Caco-2 (cell line): ENCODE measurements at regions of chr21 and their contacts with region 1.

Region 1: DNA sequence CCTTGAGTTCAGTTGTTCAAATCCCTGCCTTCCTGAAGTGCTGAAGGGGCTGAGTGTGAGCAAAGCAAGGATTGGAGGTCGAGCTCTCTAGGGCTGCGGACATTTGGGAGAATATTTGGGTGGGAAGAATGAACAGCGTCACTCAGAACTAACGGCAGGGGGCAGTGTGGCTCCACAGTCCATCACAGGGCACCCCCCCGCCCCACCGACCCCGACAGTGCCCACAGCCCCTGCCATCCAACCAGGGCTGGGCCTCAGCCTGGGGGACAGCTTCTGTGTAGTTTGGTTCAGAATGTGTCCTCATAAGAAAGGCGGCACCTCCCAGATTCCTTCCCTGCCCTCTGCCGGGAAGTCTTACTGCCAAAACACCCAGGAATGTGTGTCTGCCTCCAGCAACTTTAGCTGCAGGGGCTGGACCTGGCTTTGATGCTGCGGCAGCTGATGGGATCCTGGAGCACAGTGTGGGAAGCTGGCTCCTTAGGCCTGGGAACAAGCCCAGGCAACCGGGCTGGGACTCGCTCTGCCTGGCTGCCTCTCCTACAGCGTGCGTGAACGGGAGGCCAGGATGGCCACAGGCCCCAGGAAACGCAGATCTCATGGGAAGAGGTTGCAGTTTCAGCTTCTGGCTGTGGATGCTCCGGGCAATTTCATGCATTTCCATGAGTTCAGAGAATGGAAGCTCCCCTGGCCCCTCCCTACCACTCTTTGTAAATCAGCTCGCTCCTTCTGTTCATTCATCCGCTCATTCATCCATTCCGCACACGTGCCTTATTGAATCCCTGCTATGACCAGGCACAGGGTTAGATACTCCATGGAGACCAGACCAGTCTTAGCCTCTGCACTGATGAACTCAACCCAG is 104.9 kb upstream of the TMPRSS2 start:
- DNase-seq: peak; percentile 74 to 82
- H3K4me3 ChIP-seq: 0 out of 2 replicates have a peak overlapping the region, but pooled peaks have one; percentile 2
- H3K4me3 Mint-ChIP-seq: peak overlapping the region; percentile 60
- H3K27ac Mint-ChIP-seq: peak overlapping the region; percentile 63
- H3K4me1 ChIP-seq: peaks cover 30% of the 10 kb centered on the region
- H3K4me1 Mint-ChIP-seq: peaks cover 18% of the 10 kb centered on the region
- H3K27me3 ChIP-seq: no peaks in the 10 kb centered on the region
- H3K27me3 Mint-ChIP-seq: no peaks in the 10 kb centered on the region
- CTCF ChIP-seq: peak; percentile 73 to 90

Region 2: GRCh38 chr21:41634873-41635272 is 22.0 kb after region 1 on chr21:
- CTCF ChIA-PET with region 1: interaction called, 10 read pairs
- POLR2A ChIA-PET with region 1: no interaction called
- intact Hi-C with region 1: loop called (anchors 1 kb)
- DNase-seq: peak in 1 of 2 experiments; percentile 26
- H3K4me3 ChIP-seq: no peak overlapping the region
- H3K4me3 Mint-ChIP-seq: no peak overlapping the region
- H3K27ac Mint-ChIP-seq: peak overlapping the region; percentile 36
- H3K4me1 ChIP-seq: peaks cover 30% of the 10 kb centered on the region
- H3K4me1 Mint-ChIP-seq: peaks cover 24% of the 10 kb centered on the region
- H3K27me3 ChIP-seq: no peaks in the 10 kb centered on the region; the same call in 1 of the 2 replicates
- H3K27me3 Mint-ChIP-seq: no peaks in the 10 kb centered on the region
- CTCF ChIP-seq: no peak

Region 3: DNA sequence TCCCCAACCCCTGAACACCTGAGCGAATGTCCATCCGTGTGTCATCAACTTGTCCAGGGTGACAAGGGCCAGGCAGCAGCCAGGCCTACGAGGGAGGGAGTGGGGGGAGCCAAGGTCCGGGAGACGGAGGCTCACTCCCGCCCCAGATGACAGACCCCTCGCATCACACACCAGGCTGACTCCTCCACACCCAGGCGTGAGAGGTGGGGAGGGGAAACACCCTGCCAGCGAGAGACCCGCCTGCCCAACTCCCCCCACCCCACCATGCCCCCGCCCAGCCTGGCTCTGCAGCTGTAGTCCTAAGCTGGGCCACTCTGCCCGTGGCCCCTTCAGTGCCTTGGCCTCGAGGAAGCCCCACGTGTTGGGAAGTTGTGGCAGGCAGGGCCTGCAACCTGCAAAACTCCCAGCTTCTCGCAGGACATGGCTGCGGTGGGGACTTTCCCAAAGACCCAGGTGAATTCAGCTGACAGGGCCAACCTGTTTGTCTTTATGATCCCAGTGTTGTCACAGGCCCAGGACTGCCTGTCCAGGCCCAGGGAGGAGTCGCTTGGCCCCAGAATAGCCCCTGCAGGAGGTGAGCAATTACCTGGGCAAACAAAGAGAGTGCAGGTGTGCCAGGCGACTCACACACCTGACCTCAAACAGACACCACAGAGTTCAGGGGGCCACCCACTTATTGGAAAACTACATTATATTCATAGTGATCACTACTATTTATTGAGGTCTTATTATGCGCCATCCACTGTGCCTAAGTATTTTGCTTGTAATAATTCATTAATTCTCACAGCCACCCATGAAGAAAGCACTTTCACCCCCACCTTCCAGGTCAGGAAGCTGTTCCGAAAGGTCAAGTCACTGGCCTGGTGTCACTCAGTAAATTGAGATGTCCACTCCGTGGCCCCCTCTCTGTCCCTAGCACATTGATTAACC is 91.2 kb after region 1 on chr21:
- CTCF ChIA-PET with region 1: interaction called, 13 read pairs
- POLR2A ChIA-PET with region 1: no interaction called
- intact Hi-C with region 1: no loop called
- DNase-seq: peak; percentile 85 to 92
- H3K4me3 ChIP-seq: no peak overlapping the region
- H3K4me3 Mint-ChIP-seq: peak overlapping the region; percentile 28
- H3K27ac Mint-ChIP-seq: peak overlapping the region; percentile 67
- H3K4me1 ChIP-seq: peaks cover 53% of the 10 kb centered on the region
- H3K4me1 Mint-ChIP-seq: peaks cover 40% of the 10 kb centered on the region
- H3K27me3 ChIP-seq: no peaks in the 10 kb centered on the region
- H3K27me3 Mint-ChIP-seq: no peaks in the 10 kb centered on the region
- CTCF ChIP-seq: no peak

Region 4: GRCh38 chr21:41763398-41763931 is 150.6 kb after region 1 on chr21:
- CTCF ChIA-PET with region 1: interaction called, 61 read pairs
- POLR2A ChIA-PET with region 1: interaction called, 4 read pairs
- intact Hi-C with region 1: loop called (anchors 2 kb)
- DNase-seq: no peak
- H3K4me3 ChIP-seq: no peak overlapping the region
- H3K4me3 Mint-ChIP-seq: peak overlapping the region; percentile 37
- H3K27ac Mint-ChIP-seq: peak overlapping the region; percentile 79
- H3K4me1 ChIP-seq: peaks cover 45% of the 10 kb centered on the region
- H3K4me1 Mint-ChIP-seq: peaks cover 45% of the 10 kb centered on the region
- H3K27me3 ChIP-seq: no peaks in the 10 kb centered on the region
- H3K27me3 Mint-ChIP-seq: no peaks in the 10 kb centered on the region
- CTCF ChIP-seq: no peak

Region 5: GRCh38 chr21:41816220-41817165 is 203.6 kb after region 1 on chr21:
- CTCF ChIA-PET with region 1: interaction called, 25 read pairs
- POLR2A ChIA-PET with region 1: no interaction called
- intact Hi-C with region 1: loop called (anchors 1 kb)
- DNase-seq: peak; percentile 51 to 64
- H3K4me3 ChIP-seq: no peak overlapping the region
- H3K4me3 Mint-ChIP-seq: no peak overlapping the region
- H3K27ac Mint-ChIP-seq: peak overlapping the region; percentile 42
- H3K4me1 ChIP-seq: 0 out of 2 replicates have a peak, but pooled peaks cover 3% of the 10 kb centered on the region
- H3K4me1 Mint-ChIP-seq: no peaks in the 10 kb centered on the region
- H3K27me3 ChIP-seq: no peaks in the 10 kb centered on the region
- H3K27me3 Mint-ChIP-seq: no peaks in the 10 kb centered on the region
- CTCF ChIP-seq: peak; percentile 73